GM10248 (cell line): ENCODE measurements at regions of chr18 and their contacts with region 1.

Region 1: GRCh38 chr18:63963615-63964256 is 6.1 kb upstream of the SERPINB8 start:
- DNase-seq: peak; percentile 33
- CTCF ChIP-seq: peak; percentile 82

Region 2: GRCh38 chr18:63949068-63949737 is 14.5 kb before region 1 on chr18 and contains the start of gene HMSD:
- CTCF ChIA-PET with region 1: interaction called, 36 read pairs
- POLR2A ChIA-PET with region 1: no interaction called
- DNase-seq: peak; percentile 83
- CTCF ChIP-seq: peak; percentile 40